ENCODE measurements at regions of chr1 and their contacts with region 1.

Region 1: DNA sequence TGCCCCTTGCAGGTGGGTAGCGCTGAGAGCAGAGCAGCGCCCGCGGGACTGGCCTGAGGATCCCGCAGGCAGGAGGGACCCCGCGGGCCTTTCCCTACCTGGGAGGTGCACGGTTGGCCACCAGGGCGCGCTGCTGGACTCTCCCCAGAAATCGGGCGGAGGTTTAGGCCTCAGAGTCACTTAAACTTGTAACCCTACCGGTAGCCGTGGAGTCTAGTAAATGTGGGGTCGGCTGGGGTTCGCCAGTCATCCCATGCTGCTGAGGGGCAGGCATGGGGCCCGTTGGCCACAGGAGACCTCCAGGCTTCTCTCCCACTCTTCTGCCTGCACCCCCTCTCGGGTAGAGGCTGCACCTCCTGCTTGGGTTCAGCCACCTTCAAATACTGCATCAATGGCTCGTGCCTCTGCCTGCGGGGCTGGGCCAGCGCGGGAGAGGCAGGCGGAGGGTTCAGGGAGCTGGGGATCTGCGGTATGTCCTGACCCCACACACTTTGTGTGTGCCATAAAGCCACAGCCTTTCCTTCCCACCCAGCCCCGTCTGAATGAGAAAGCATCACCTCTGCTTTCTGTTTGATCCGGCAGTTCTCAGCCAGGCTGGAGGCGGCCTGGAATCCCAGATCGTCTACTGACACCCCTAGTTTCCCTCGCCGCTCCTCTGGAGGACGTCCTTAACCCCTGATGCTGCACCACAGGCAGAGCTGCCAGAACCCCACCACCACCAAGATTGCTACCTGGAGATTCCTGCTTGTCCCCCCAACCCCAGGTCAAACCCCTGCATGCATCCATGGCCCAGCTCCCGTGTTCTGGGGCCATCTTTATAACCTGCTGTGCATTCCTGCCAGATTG is 12.3 kb upstream of the GSTM4 start:
- DNase-seq: peak; percentile 88
- H3K4me3 Mint-ChIP-seq: no peak overlapping the region
- H3K27ac Mint-ChIP-seq: no peak overlapping the region
- H3K4me1 Mint-ChIP-seq: peaks cover 16% of the 10 kb centered on the region
- H3K27me3 Mint-ChIP-seq: no peaks in the 10 kb centered on the region
- CTCF ChIP-seq: peak; percentile 64

Region 2: GRCh38 chr1:109667452-109668122 is 24.0 kb after region 1 on chr1 and contains the start of gene GSTM2:
- CTCF ChIA-PET with region 1: no interaction called
- intact Hi-C with region 1: no loop called
- DNase-seq: no peak
- H3K4me3 Mint-ChIP-seq: no peak within 1 kb of the TSS
- H3K27ac Mint-ChIP-seq: no peak within 1 kb of the TSS
- H3K4me1 Mint-ChIP-seq: no peaks in the 10 kb centered on the region
- H3K27me3 Mint-ChIP-seq: no peaks in the 10 kb centered on the region
- CTCF ChIP-seq: no peak
- total RNA-seq, gene GSTM2: 2.5 and 3.2 TPM in 2 replicates

Region 3: DNA sequence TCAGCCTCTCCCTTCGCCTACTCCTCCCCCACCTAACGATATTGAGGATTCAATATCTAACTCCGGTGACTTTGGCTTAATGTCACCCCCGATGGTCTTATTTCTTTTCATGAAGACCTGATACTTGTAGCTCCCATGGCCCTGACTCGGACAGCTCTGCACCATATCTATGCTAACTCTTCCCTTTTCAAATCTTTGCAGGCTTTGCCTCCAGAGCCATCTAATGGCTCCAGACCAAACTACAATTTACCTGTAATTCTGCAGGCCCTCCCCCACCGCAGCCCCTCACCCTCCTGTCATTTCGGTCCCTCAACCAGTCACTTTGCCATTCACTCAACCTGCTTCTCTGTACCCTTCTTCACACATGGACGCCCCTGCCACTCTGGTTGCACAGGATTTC is 60.6 kb after region 1 on chr1:
- CTCF ChIA-PET with region 1: interaction called, 18 read pairs
- intact Hi-C with region 1: loop called (anchors 5 kb)
- DNase-seq: no peak
- H3K4me3 Mint-ChIP-seq: no peak overlapping the region
- H3K27ac Mint-ChIP-seq: no peak overlapping the region
- H3K4me1 Mint-ChIP-seq: peaks cover 20% of the 10 kb centered on the region
- H3K27me3 Mint-ChIP-seq: peaks cover 13% of the 10 kb centered on the region
- CTCF ChIP-seq: no peak

Region 4: GRCh38 chr1:109773146-109773899 is 129.7 kb after region 1 on chr1:
- CTCF ChIA-PET with region 1: interaction called, 22 read pairs
- intact Hi-C with region 1: loop called (anchors 1 kb)
- DNase-seq: peak; percentile 72
- H3K4me3 Mint-ChIP-seq: no peak overlapping the region
- H3K27ac Mint-ChIP-seq: no peak overlapping the region
- H3K4me1 Mint-ChIP-seq: no peaks in the 10 kb centered on the region
- H3K27me3 Mint-ChIP-seq: peaks cover 14% of the 10 kb centered on the region
- CTCF ChIP-seq: peak; percentile 52

Region 5: DNA sequence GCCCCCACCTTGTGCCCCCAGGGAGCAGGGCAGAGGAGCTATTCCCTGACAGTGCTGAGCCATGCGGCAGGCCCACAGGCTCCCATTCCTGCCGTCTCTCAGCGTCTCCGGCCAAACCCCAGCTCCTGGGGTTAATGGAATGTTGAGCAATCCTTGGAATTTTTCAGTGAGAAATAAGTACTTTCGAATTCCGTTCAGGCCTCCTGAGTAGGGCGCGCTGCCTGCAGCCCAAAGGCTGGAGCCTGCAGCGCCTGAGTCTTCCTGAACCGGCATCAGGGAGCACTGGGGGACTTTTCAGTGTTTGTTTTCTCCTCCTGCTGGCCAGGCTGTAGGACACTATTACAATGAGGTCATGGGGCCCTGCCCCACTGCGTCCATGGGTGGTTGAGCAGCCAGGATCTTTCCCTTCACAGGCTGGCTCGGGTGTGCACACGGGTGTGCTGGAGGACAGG is 233.7 kb after region 1 on chr1:
- CTCF ChIA-PET with region 1: no interaction called
- intact Hi-C with region 1: no loop called
- DNase-seq: peak; percentile 44
- H3K4me3 Mint-ChIP-seq: no peak overlapping the region
- H3K27ac Mint-ChIP-seq: no peak overlapping the region
- H3K4me1 Mint-ChIP-seq: no peaks in the 10 kb centered on the region
- H3K27me3 Mint-ChIP-seq: no peaks in the 10 kb centered on the region
- CTCF ChIP-seq: no peak